Aorta (tissue), 5 donors: ENCODE measurements at regions of chr6 and their contacts with region 1.

Region 1: GRCh38 chr6:139219271-139219729 is 72.5 kb downstream of the TXLNB start:
- DNase-seq: peak; percentile 90 to 93
- ATAC-seq: peak; percentile 96
- H3K4me3 ChIP-seq: no peak overlapping the region
- H3K27ac ChIP-seq: peak overlapping the region in 1 of 2 donors; percentile 95
- H3K4me1 ChIP-seq: no peaks in the 10 kb centered on the region
- H3K27me3 ChIP-seq: no peaks in the 10 kb centered on the region

Region 2: DNA sequence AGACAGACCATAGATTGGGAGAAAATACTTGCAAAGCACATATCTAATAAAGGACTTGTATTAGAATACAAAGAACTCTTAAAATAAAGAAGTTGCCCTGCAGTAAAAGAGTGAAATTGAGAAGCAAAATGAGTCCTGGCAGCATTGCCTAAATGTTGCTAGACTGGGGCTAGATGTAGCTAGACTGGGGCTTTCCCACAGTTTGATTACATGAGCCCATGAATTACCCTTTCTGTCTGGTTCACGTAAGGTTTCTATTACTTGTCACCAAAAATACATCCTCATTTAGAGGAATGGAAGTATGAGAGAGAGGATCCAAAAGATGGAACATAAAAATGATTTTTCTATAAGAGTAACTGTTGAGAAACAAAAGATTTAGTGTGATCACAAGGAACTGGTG is 503.3 kb before region 1 on chr6:
- intact Hi-C with region 1: no loop called
- DNase-seq: no peak
- ATAC-seq: no peak
- H3K4me3 ChIP-seq: no peak overlapping the region
- H3K27ac ChIP-seq: no peak overlapping the region
- H3K4me1 ChIP-seq: no peaks in the 10 kb centered on the region
- H3K27me3 ChIP-seq: no peaks in the 10 kb centered on the region

Region 3: DNA sequence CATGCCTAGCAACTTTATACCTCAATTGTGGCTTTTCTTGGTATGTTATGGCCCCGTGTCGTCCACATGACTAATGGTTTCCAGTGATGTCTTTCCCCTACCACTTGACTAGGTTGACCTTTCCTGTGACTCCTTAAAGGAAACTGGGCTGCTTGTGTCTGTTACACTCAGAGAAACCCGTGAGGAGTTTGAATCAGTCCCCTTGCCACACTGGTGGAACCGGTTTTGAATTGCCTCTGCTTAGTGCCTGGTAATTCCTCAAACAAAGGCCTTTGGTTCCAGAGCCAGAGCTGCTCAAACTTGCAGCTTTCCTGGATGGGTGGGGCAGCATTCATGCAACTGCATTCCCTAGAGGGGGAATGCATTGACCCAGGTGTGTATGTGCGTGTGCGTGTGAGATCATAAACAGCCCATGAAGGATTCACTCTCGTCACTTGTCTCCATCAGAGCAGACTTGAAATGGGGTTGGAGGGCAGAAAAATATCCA is 401.4 kb before region 1 on chr6:
- intact Hi-C with region 1: loop called in 1 of 2 experiments (anchors 5 kb)
- DNase-seq: no peak
- ATAC-seq: no peak
- H3K4me3 ChIP-seq: no peak overlapping the region
- H3K27ac ChIP-seq: no peak overlapping the region
- H3K4me1 ChIP-seq: no peaks in the 10 kb centered on the region
- H3K27me3 ChIP-seq: no peaks in the 10 kb centered on the region

Region 4: DNA sequence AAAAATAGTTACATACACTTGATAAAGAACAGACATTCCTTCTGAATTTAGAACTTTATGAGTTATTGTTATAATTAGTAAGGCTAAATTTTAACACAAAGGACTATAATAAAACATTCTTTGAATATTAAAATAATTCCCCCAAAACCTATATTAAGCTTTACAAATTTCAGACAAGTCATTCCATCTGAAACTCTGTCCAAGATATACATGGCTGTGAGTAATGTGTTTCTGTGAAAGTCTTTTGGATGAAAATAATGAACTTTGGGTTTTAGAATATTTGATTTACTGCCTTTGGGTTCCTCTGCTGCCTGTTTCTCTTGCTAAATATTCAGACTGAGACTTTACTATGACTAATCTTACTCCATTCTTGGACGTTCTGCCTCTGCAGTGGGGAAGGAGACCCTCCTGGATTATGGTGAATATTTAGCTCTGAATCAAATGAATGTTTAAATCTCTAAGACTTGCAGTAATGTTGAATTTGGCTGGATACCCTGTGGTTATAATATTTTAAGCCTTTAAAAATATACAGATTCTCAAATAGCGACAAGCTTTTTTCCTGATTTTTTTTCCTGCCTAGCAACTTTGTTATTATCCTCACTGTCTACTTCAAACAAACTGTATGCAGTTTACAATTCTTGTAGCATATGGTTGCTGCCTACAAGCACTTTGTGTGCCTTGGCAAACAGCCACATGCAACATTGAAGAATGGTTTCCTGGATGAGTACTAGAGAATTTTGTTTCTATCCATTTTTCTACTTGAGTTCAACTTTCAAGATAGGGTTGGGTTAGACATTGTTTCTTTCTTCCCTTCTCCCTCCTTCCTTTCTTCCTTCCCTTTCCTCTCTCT is 21.1 kb after region 1 on chr6:
- intact Hi-C with region 1: loop called in 1 of 2 experiments (anchors 1 kb)
- DNase-seq: no peak
- ATAC-seq: peak; percentile 68
- H3K4me3 ChIP-seq: no peak overlapping the region
- H3K27ac ChIP-seq: peak overlapping the region; percentile 76 to 80
- H3K4me1 ChIP-seq: peaks cover 0 to 10% of the 10 kb centered on the region in 2 donors
- H3K27me3 ChIP-seq: no peaks in the 10 kb centered on the region

Region 5: DNA sequence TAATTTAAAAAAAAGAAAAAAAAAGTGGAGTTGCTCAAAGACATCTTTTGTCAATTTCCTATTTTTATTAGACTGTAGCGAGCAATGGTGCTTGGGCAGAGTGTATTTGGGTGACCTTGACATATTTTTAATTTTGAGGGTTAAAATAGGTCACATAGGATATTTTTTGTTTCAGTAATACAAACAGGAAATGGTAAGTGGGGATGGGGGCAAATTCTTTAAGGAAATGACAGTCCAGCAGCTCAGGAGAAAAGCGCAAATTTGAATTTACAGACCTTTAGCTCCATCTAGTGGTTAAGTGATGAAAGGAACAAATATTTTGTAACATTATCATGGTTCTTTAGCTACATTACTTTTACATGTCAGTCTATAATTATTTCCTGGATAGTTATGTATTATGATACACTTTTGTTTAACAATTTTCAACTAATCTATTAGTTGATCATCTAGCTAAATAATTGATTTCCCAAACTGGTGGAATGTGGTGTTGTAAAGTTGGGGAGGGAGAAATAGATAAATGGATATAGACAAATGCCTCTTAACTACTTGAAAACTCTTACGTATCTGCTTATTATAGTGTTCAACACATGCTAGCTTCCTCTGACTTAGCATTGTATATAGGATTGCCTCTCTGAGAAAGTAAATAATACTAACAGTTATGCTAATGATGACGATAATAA is 145.1 kb after region 1 on chr6:
- intact Hi-C with region 1: loop called (anchors 1 to 2 kb)
- DNase-seq: no peak
- ATAC-seq: peak; percentile 69
- H3K4me3 ChIP-seq: no peak overlapping the region
- H3K27ac ChIP-seq: no peak overlapping the region
- H3K4me1 ChIP-seq: peaks cover 0 to 3% of the 10 kb centered on the region in 2 donors
- H3K27me3 ChIP-seq: no peaks in the 10 kb centered on the region

Region 6: GRCh38 chr6:139369568-139370282 is 150.4 kb after region 1 on chr6:
- intact Hi-C with region 1: loop called (anchors 1 to 2 kb)
- DNase-seq: no peak
- ATAC-seq: no peak
- H3K4me3 ChIP-seq: peak overlapping the region; percentile 9 to 10
- H3K27ac ChIP-seq: peak overlapping the region in 1 of 2 donors; percentile 25
- H3K4me1 ChIP-seq: peaks cover 0 to 3% of the 10 kb centered on the region in 2 donors
- H3K27me3 ChIP-seq: no peaks in the 10 kb centered on the region

Region 7: DNA sequence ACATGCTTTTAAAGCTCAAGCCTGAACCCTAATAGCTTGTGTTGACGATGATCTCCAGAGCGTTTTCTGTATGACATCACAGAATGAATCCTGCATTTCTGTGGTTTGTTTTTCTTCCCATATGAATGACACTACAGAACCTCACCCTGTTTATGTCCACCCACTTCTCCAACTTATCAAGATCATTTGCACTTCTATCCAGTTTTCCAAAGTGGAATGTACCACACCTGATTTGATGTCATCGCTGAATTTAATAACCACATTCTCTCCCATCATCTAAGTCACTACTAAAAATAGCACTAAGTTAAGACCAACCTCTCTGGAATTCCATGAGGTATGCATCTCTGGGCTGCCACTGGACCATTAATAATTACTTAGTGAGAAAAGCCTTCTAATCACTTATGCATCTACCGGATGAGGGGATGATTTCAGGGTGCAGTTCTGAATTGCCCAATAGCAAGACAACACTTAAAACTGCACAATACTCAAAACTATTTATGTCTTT is 188.5 kb after region 1 on chr6:
- intact Hi-C with region 1: no loop called
- DNase-seq: no peak
- ATAC-seq: no peak
- H3K4me3 ChIP-seq: no peak overlapping the region
- H3K27ac ChIP-seq: no peak overlapping the region
- H3K4me1 ChIP-seq: no peaks in the 10 kb centered on the region
- H3K27me3 ChIP-seq: no peaks in the 10 kb centered on the region